CD4-positive, alpha-beta memory T cell (primary cell): ENCODE measurements at regions of chr10 and their contacts with region 1.

Region 1: GRCh38 chr10:2978111-2978510 is 89.2 kb upstream of the PFKP start:
- DNase-seq: peak in 1 of 5 donors; percentile 12
- H3K4me3 ChIP-seq: no peak overlapping the region
- H3K4me3 Mint-ChIP-seq: no peak overlapping the region
- H3K27ac ChIP-seq: no peak overlapping the region
- H3K27ac Mint-ChIP-seq: peak overlapping the region in 1 of 7 donors; percentile 73
- H3K4me1 ChIP-seq: no peaks in the 10 kb centered on the region
- H3K4me1 Mint-ChIP-seq: peaks cover 0 to 4% (median 0%) of the 10 kb centered on the region in 4 donors
- H3K27me3 ChIP-seq: no peaks in the 10 kb centered on the region
- H3K27me3 Mint-ChIP-seq: peaks cover under 1 to 5% of the 10 kb centered on the region in 2 donors

Region 2: GRCh38 chr10:1420661-1421362 is 1557.3 kb before region 1 on chr10:
- CTCF ChIA-PET with region 1: no interaction called
- POLR2A ChIA-PET with region 1: no interaction called
- intact Hi-C with region 1: loop called (anchors 5 kb)
- DNase-seq: peak; percentile 24 to 56 (median 27)
- H3K4me3 ChIP-seq: no peak overlapping the region
- H3K4me3 Mint-ChIP-seq: peak overlapping the region; percentile 13 to 70 (median 48)
- H3K27ac ChIP-seq: no peak overlapping the region
- H3K27ac Mint-ChIP-seq: no peak overlapping the region
- H3K4me1 ChIP-seq: peaks cover 6% of the 10 kb centered on the region
- H3K4me1 Mint-ChIP-seq: peaks cover 4 to 11% (median 10%) of the 10 kb centered on the region in 4 donors
- H3K27me3 ChIP-seq: no peaks in the 10 kb centered on the region
- H3K27me3 Mint-ChIP-seq: peaks cover 14 to 41% of the 10 kb centered on the region in 2 donors

Region 3: GRCh38 chr10:2963889-2964631 is 14.1 kb before region 1 on chr10:
- CTCF ChIA-PET with region 1: no interaction called
- POLR2A ChIA-PET with region 1: no interaction called
- intact Hi-C with region 1: no loop called
- DNase-seq: no peak
- H3K4me3 ChIP-seq: no peak overlapping the region
- H3K4me3 Mint-ChIP-seq: no peak overlapping the region
- H3K27ac ChIP-seq: no peak overlapping the region
- H3K27ac Mint-ChIP-seq: no peak overlapping the region
- H3K4me1 ChIP-seq: no peaks in the 10 kb centered on the region
- H3K4me1 Mint-ChIP-seq: no peaks in the 10 kb centered on the region
- H3K27me3 ChIP-seq: no peaks in the 10 kb centered on the region
- H3K27me3 Mint-ChIP-seq: peaks cover 15 to 16% of the 10 kb centered on the region in 2 donors

Region 4: GRCh38 chr10:3036155-3037021 is 58.3 kb after region 1 on chr10:
- CTCF ChIA-PET with region 1: no interaction called
- POLR2A ChIA-PET with region 1: no interaction called
- intact Hi-C with region 1: no loop called
- DNase-seq: no peak
- H3K4me3 ChIP-seq: no peak overlapping the region
- H3K4me3 Mint-ChIP-seq: no peak overlapping the region
- H3K27ac ChIP-seq: no peak overlapping the region
- H3K27ac Mint-ChIP-seq: no peak overlapping the region
- H3K4me1 ChIP-seq: no peaks in the 10 kb centered on the region
- H3K4me1 Mint-ChIP-seq: peaks cover 0 to 2% (median 0%) of the 10 kb centered on the region in 4 donors
- H3K27me3 ChIP-seq: no peaks in the 10 kb centered on the region
- H3K27me3 Mint-ChIP-seq: peaks cover 28 to 33% of the 10 kb centered on the region in 2 donors